Dendritic cell treated with granulocyte-macrophage colony-stimulating factor and Interleukin-4, amounts not matched to agents 40 ng/mL and 50 ng/mL, for 4 days (primary cell): ENCODE measurements at regions of chr5 and their contacts with region 1.

Region 1: DNA sequence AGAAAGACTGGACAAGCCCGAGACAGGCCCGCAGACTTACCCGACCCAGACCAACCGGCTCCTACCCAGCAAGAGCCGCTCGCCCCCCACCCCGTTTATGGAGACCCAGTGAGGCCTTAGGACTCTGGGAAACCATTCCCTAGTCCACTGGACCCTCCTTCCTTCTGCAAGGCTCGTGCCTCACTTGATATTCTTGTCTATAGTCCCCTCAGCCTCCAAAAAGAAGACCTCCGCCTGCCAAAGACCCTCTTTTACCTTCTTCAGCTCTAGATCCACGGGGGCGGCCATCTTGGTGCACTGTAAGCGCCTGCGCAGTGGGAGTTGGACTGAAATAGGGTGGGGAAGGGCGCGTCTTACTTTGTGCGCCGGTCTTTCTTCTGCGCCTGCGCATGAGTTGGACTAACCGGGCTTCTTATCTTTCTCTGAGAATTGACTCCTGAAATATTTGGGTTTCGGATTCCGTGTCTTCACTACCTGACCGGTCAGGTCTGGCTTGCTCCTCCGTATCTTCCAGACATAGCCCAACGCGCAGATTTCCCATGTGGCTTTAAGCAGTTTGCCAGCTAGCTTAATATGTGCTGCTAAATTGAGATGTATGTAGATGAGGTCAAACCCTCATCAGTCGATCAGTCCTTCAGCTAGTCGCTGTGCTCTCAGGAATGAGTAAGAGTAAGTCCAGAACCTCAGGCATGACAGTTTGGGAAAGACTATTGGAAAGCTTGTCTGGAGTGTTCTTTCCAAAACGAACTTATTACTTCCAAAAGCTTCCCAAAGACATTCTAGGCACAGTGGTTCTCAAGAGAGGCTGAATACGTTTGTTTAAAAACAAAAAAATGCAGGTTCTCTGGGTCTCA is at the start of gene PFDN1:
- H3K4me3 Mint-ChIP-seq: peak within 1 kb of the TSS; percentile 96
- H3K27ac Mint-ChIP-seq: peak within 1 kb of the TSS; percentile 96
- H3K4me1 Mint-ChIP-seq: peaks cover 30% of the 10 kb centered on the region
- H3K27me3 Mint-ChIP-seq: no peaks in the 10 kb centered on the region

Region 2: GRCh38 chr5:140251527-140251973 is 51.5 kb before region 1 on chr5:
- intact Hi-C with region 1: loop called (anchors 10 kb)
- H3K4me3 Mint-ChIP-seq: no peak overlapping the region
- H3K27ac Mint-ChIP-seq: peak overlapping the region; percentile 78
- H3K4me1 Mint-ChIP-seq: peaks cover 35% of the 10 kb centered on the region
- H3K27me3 Mint-ChIP-seq: no peaks in the 10 kb centered on the region

Region 3: DNA sequence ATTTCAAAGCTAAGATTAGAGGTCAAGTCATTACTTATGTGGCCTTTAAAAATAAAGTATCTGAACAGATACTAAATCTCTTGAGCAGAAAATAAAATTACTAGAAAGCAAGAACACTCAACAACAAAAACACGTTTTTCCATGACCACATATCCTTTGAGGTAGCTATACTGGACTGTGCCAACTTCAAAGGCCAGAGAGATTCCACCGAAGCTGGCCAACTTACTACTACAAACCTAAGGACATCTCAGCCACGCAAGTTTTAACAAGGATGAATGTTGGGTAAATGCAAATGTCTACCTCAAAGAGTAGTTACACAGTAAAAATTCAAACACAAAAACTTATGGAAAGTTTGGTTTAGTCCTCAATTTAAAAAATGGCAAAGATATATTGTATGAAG is 19.0 kb before region 1 on chr5:
- intact Hi-C with region 1: no loop called
- H3K4me3 Mint-ChIP-seq: no peak overlapping the region
- H3K27ac Mint-ChIP-seq: no peak overlapping the region
- H3K4me1 Mint-ChIP-seq: peaks cover 24% of the 10 kb centered on the region
- H3K27me3 Mint-ChIP-seq: no peaks in the 10 kb centered on the region

Region 4: GRCh38 chr5:140346348-140347101 is 43.5 kb after region 1 on chr5 and contains the start of gene HBEGF:
- intact Hi-C with region 1: loop called (anchors 5 kb)
- H3K4me3 Mint-ChIP-seq: peak within 1 kb of the TSS; percentile 89
- H3K27ac Mint-ChIP-seq: peak within 1 kb of the TSS; percentile 74
- H3K4me1 Mint-ChIP-seq: peaks cover 54% of the 10 kb centered on the region
- H3K27me3 Mint-ChIP-seq: peaks cover 3% of the 10 kb centered on the region